ENCODE measurements at regions of chr11 and their contacts with region 1.

Region 1: GRCh38 chr11:35138943-35139721 is at the start of gene CD44:
- DNase-seq: peak; percentile 70
- ATAC-seq: peak; percentile 69
- H3K4me3 Mint-ChIP-seq: peak within 1 kb of the TSS; percentile 93
- H3K27ac Mint-ChIP-seq: peak within 1 kb of the TSS; percentile 84
- H3K4me1 Mint-ChIP-seq: peaks cover 47% of the 10 kb centered on the region
- H3K27me3 Mint-ChIP-seq: no peaks in the 10 kb centered on the region
- total RNA-seq, gene CD44: 551 to 555 TPM

Region 2: DNA sequence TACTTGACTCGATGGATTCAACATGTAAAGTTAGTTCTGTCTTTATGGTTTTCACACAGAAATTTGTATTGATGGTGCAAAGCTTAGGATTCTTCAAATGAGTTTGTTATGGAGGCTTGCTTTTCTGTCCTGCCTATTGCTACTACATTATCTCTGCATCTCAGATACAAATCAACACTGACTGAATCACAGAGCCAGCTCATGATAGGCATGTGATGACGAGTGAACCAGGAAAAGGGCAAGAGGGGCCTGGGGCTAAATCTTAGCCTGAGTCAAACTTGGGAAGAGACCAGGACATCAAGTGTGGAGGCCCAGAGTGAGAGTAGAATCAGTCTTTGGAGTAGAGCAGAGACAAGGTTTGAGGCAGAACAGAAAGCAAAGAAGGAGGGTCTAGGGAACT is 107.3 kb before region 1 on chr11:
- POLR2A ChIA-PET with region 1: no interaction called
- DNase-seq: no peak
- ATAC-seq: no peak
- H3K4me3 Mint-ChIP-seq: no peak overlapping the region
- H3K27ac Mint-ChIP-seq: peak overlapping the region; percentile 28
- H3K4me1 Mint-ChIP-seq: peaks cover 23% of the 10 kb centered on the region
- H3K27me3 Mint-ChIP-seq: peaks cover 2% of the 10 kb centered on the region

Region 3: DNA sequence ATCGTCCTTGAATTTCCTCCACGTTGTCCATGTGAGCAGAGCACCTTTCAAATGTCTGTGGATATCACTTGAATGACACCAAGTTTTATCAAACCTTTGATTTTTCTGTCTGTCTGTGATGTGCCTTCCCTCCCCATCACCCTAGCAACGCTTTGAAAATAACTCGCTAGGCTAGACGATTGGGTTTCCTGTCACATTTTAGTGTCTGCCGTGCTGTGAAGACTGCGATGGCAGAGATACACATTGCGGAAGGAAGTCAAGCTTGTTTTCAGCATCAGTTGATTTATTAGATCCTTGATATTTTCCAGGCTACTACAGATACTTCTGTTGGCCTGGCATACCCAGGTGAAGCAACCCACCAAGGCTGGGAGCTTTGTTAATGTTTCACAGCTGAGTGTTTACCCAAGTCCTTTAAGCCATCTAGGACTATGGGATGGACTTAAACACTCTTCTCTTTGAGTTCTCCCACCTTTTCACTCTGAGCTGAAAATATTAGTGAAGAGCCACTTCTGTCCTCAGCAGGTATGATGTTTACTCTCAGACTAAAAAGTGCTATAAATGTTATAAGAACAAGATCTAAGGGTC is 93.8 kb before region 1 on chr11:
- POLR2A ChIA-PET with region 1: interaction called, 38 read pairs
- DNase-seq: peak; percentile 42
- ATAC-seq: peak; percentile 81
- H3K4me3 Mint-ChIP-seq: peak overlapping the region; percentile 86
- H3K27ac Mint-ChIP-seq: peak overlapping the region; percentile 90
- H3K4me1 Mint-ChIP-seq: peaks cover 55% of the 10 kb centered on the region
- H3K27me3 Mint-ChIP-seq: no peaks in the 10 kb centered on the region

Region 4: GRCh38 chr11:35082321-35083182 is 56.6 kb before region 1 on chr11:
- POLR2A ChIA-PET with region 1: interaction called, 50 read pairs
- DNase-seq: peak; percentile 80
- ATAC-seq: peak; percentile 82
- H3K4me3 Mint-ChIP-seq: peak overlapping the region; percentile 79
- H3K27ac Mint-ChIP-seq: peak overlapping the region; percentile 90
- H3K4me1 Mint-ChIP-seq: peaks cover 76% of the 10 kb centered on the region
- H3K27me3 Mint-ChIP-seq: no peaks in the 10 kb centered on the region

Region 5: GRCh38 chr11:35158701-35159510 is 19.8 kb after region 1 on chr11:
- POLR2A ChIA-PET with region 1: interaction called, 87 read pairs
- DNase-seq: no peak
- ATAC-seq: no peak
- H3K4me3 Mint-ChIP-seq: peak overlapping the region; percentile 62
- H3K27ac Mint-ChIP-seq: peak overlapping the region; percentile 83
- H3K4me1 Mint-ChIP-seq: peaks cover 88% of the 10 kb centered on the region
- H3K27me3 Mint-ChIP-seq: no peaks in the 10 kb centered on the region

Region 6: GRCh38 chr11:35173011-35173511 is 33.9 kb after region 1 on chr11:
- POLR2A ChIA-PET with region 1: interaction called, 87 read pairs
- DNase-seq: no peak
- ATAC-seq: no peak
- H3K4me3 Mint-ChIP-seq: peak overlapping the region; percentile 75
- H3K27ac Mint-ChIP-seq: peak overlapping the region; percentile 94
- H3K4me1 Mint-ChIP-seq: peaks cover 82% of the 10 kb centered on the region
- H3K27me3 Mint-ChIP-seq: no peaks in the 10 kb centered on the region

Region 7: GRCh38 chr11:35541621-35542375 is 402.7 kb after region 1 on chr11:
- POLR2A ChIA-PET with region 1: no interaction called
- DNase-seq: no peak
- ATAC-seq: no peak
- H3K4me3 Mint-ChIP-seq: no peak overlapping the region
- H3K27ac Mint-ChIP-seq: no peak overlapping the region
- H3K4me1 Mint-ChIP-seq: no peaks in the 10 kb centered on the region
- H3K27me3 Mint-ChIP-seq: peaks cover 6% of the 10 kb centered on the region